ENCODE measurements at regions of chr13 and their contacts with region 1.

Region 1: GRCh38 chr13:101401196-101401595 is 15.1 kb downstream of the NALCN start:
- DNase-seq: no peak
- H3K4me3 Mint-ChIP-seq: no peak overlapping the region
- H3K27ac Mint-ChIP-seq: no peak overlapping the region
- H3K4me1 Mint-ChIP-seq: no peaks in the 10 kb centered on the region
- H3K27me3 Mint-ChIP-seq: peaks cover 6% of the 10 kb centered on the region

Region 2: DNA sequence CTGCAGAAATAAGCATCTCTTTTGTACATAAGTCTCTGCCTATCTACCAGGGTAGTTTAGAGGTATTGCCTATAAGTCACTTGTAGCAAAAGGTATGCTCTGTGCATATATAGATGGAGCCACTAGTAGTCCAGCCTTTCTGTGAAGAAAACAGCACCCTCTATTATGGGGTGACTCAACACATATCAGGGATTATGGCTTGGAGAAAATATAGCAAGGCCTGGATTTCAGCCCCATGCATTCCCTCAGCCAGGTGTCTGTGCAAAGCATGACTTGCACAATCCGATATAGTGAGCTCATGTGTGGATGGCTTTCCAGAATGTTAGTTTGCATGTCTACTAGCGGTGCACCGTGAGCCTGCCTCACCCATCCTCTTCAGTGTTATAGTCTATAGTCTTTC is 28.5 kb after region 1 on chr13:
- CTCF ChIA-PET with region 1: no interaction called
- intact Hi-C with region 1: loop called (anchors 1 kb)
- DNase-seq: no peak
- H3K4me3 Mint-ChIP-seq: no peak overlapping the region
- H3K27ac Mint-ChIP-seq: no peak overlapping the region
- H3K4me1 Mint-ChIP-seq: no peaks in the 10 kb centered on the region
- H3K27me3 Mint-ChIP-seq: peaks cover 24% of the 10 kb centered on the region

Region 3: DNA sequence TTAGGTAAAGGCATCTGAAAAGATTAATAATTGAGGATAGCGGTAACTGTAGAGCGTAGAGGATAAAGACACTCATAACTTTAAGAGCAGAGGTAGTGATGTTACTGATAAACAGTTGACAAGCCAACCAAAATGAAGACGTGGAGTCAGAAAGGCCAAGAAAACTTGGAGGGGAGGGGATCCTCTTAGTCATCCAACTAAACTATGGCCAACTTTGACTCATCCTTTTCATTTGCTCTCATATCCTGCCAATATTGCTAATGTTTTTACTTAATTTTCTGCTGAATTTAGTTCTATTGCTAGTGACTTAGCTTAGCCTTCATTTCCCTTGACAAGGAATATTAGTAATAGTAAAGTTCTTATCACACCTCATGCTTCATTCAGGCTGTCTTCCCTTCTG is 64.7 kb after region 1 on chr13:
- CTCF ChIA-PET with region 1: no interaction called
- intact Hi-C with region 1: no loop called
- DNase-seq: no peak
- H3K4me3 Mint-ChIP-seq: no peak overlapping the region
- H3K27ac Mint-ChIP-seq: no peak overlapping the region
- H3K4me1 Mint-ChIP-seq: no peaks in the 10 kb centered on the region
- H3K27me3 Mint-ChIP-seq: peaks cover 8% of the 10 kb centered on the region

Measured in activated naive CD4-positive, alpha-beta T cell treated with anti-CD3 and anti-CD28 coated beads for 36 hours (primary cell).